ENCODE measurements at regions of chr1 and their contacts with region 1.

Region 1: GRCh38 chr1:26145041-26145959 is 13.6 kb upstream of the FAM110D start:
- DNase-seq: no peak
- ATAC-seq: peak; percentile 69
- H3K4me3 Mint-ChIP-seq: no peak overlapping the region
- H3K27ac Mint-ChIP-seq: no peak overlapping the region
- H3K4me1 Mint-ChIP-seq: peaks cover 3% of the 10 kb centered on the region
- H3K27me3 Mint-ChIP-seq: peaks cover 15% of the 10 kb centered on the region
- CTCF ChIP-seq: peak; percentile 50

Region 2: GRCh38 chr1:25895365-25895993 is 249.8 kb before region 1 on chr1:
- CTCF ChIA-PET with region 1: interaction called, 9 read pairs
- POLR2A ChIA-PET with region 1: no interaction called
- intact Hi-C with region 1: loop called (anchors 1 kb)
- DNase-seq: peak; percentile 80
- ATAC-seq: peak; percentile 100
- H3K4me3 Mint-ChIP-seq: peak overlapping the region; percentile 3
- H3K27ac Mint-ChIP-seq: peak overlapping the region; percentile 22
- H3K4me1 Mint-ChIP-seq: peaks cover 7% of the 10 kb centered on the region
- H3K27me3 Mint-ChIP-seq: no peaks in the 10 kb centered on the region
- CTCF ChIP-seq: peak; percentile 74

Region 3: DNA sequence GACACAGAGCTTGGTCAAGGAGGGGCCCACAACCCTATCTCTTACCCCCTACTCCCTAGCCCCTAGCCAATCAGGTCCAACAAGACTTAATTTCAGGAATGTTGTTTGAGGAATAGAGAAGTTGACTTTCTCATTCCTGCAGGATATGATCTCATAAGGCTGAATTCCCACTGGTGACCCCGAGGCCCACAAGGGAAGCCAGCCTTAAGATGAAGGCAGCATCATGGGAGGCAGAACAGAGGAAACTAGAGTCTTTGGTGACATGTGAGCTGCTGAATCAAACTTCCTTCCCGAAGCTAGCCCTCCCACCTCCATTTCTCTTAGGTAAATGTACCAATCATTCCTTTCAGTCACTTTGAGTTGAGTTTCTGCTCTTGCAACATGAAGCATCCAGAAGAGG is 42.8 kb before region 1 on chr1:
- CTCF ChIA-PET with region 1: interaction called, 126 read pairs
- POLR2A ChIA-PET with region 1: interaction called, 4 read pairs
- intact Hi-C with region 1: loop called (anchors 1 kb)
- DNase-seq: no peak
- ATAC-seq: no peak
- H3K4me3 Mint-ChIP-seq: no peak overlapping the region
- H3K27ac Mint-ChIP-seq: no peak overlapping the region
- H3K4me1 Mint-ChIP-seq: peaks cover 4% of the 10 kb centered on the region
- H3K27me3 Mint-ChIP-seq: peaks cover 14% of the 10 kb centered on the region
- CTCF ChIP-seq: no peak

Region 4: DNA sequence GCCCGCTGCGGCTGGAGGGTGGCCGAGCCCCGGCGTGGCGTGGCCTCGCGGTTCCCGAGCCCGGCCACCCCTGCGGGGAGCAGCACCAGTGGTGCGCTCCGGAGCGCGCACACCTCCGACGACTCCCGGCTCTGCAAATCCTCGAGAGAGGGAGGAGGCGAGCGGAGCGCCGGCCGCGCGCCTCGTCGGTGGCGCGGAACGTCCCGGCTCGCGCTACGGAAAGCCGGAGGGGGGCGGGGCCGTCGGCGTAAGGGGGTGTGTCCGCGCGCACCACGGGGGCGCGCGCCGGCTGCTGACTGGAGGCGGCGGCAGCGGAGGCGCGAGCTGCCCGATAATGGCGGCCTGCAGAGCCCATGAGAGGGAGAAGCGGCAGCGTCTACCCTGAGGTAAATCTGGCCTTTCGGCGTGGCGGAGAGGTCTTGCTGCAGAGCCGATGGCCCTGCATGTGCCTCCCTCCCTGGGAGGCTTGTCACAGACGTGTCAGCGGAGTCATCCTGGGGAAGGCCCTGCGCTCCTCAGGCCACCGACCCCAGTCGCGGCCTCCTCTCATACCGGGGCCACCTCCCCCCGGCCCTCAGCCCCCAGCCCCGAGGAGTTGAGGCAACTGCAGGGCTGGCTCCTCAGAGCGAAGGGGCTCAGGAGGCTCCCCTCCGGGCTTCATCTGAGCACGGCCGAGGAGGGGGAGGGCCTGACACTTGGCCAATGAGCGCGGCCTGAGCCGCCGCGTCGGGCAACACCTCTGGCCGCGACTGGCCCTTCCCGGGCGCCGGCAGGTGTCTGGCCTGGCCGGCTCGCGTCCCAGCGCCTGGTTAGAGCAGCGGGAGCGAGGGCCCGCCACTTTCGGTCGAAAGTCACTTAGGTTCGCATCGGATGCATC is 33.5 kb before region 1 on chr1 and contains the start of gene PDIK1L:
- CTCF ChIA-PET with region 1: interaction called, 17 read pairs
- POLR2A ChIA-PET with region 1: no interaction called
- intact Hi-C with region 1: no loop called
- DNase-seq: peak; percentile 90
- ATAC-seq: peak; percentile 80
- H3K4me3 Mint-ChIP-seq: peak within 1 kb of the TSS; percentile 94
- H3K27ac Mint-ChIP-seq: peak within 1 kb of the TSS; percentile 89
- H3K4me1 Mint-ChIP-seq: peaks cover 20% of the 10 kb centered on the region
- H3K27me3 Mint-ChIP-seq: no peaks in the 10 kb centered on the region
- CTCF ChIP-seq: no peak
- total RNA-seq, gene PDIK1L: 9.4 and 10.5 TPM in 2 replicates

Region 5: GRCh38 chr1:26126321-26127084 is 18.8 kb before region 1 on chr1:
- CTCF ChIA-PET with region 1: interaction called, 10 read pairs
- POLR2A ChIA-PET with region 1: interaction called, 3 read pairs
- intact Hi-C with region 1: no loop called
- DNase-seq: no peak
- ATAC-seq: peak; percentile 75
- H3K4me3 Mint-ChIP-seq: no peak overlapping the region
- H3K27ac Mint-ChIP-seq: peak overlapping the region; percentile 30
- H3K4me1 Mint-ChIP-seq: peaks cover 18% of the 10 kb centered on the region
- H3K27me3 Mint-ChIP-seq: peaks cover 6% of the 10 kb centered on the region
- CTCF ChIP-seq: no peak

Region 6: DNA sequence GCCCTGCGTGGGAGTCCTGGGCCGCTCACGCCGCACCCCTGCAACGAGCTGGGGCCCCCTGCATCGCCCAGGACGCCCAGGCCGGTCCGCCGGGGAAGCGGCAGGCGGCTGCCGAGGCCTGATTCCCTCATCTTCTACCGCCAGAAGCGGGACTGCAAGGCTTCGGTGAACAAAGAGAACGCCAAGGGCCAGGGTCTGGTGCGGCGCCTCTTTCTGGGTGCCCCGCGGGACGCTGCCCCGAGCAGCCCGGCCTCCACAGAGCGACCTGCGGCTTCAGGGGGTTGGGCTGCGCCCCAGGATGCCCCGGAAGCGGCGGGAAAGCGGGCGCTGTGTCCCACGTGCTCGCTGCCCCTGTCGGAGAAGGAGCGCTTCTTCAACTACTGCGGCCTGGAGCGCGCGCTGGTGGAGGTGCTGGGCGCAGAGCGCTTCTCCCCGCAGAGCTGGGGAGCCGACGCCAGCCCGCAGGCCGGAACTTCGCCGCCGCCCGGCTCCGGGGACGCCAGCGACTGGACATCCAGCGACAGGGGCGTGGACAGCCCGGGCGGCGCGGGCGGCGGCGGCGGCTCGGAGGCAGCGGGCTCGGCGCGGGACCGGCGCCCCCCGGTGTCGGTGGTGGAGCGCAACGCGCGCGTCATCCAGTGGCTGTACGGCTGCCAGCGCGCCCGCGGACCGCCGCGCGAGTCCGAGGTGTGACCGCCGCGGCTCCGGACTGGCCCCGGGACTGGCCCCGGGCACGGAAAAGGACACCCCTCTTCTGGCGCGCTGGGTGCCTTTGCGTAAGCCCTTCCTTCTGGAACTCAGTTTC is 16.3 kb after region 1 on chr1:
- CTCF ChIA-PET with region 1: interaction called, 12 read pairs
- POLR2A ChIA-PET with region 1: interaction called, 6 read pairs
- intact Hi-C with region 1: no loop called
- DNase-seq: peak; percentile 54
- ATAC-seq: peak; percentile 64
- H3K4me3 Mint-ChIP-seq: peak overlapping the region; percentile 59
- H3K27ac Mint-ChIP-seq: no peak overlapping the region
- H3K4me1 Mint-ChIP-seq: peaks cover 13% of the 10 kb centered on the region
- H3K27me3 Mint-ChIP-seq: peaks cover 26% of the 10 kb centered on the region
- CTCF ChIP-seq: no peak

Region 7: GRCh38 chr1:26417111-26417759 is 271.9 kb after region 1 on chr1:
- CTCF ChIA-PET with region 1: interaction called, 17 read pairs
- POLR2A ChIA-PET with region 1: no interaction called
- intact Hi-C with region 1: no loop called
- DNase-seq: peak; percentile 67
- ATAC-seq: peak; percentile 99
- H3K4me3 Mint-ChIP-seq: no peak overlapping the region
- H3K27ac Mint-ChIP-seq: no peak overlapping the region
- H3K4me1 Mint-ChIP-seq: no peaks in the 10 kb centered on the region
- H3K27me3 Mint-ChIP-seq: peaks cover 29% of the 10 kb centered on the region
- CTCF ChIP-seq: peak; percentile 35

Measured in activated B cell treated with CpG ODN at 0.5 μM for 24 hours (primary cell).